Activated CD8-positive, alpha-beta memory T cell treated with anti-CD3 and anti-CD28 coated beads, Interleukin-2, amount 10 ng/mL, durations not matched to agents 7 days and 5 days (primary cell): ENCODE measurements at regions of chr9 and their contacts with region 1.

Region 1: GRCh38 chr9:126965541-126966428 is 51.2 kb downstream of the RALGPS1 start:
- DNase-seq: peak; percentile 60
- ATAC-seq: peak; percentile 75
- H3K4me3 Mint-ChIP-seq: no peak overlapping the region
- H3K27ac Mint-ChIP-seq: no peak overlapping the region
- H3K4me1 Mint-ChIP-seq: peaks cover 5% of the 10 kb centered on the region
- H3K27me3 Mint-ChIP-seq: peaks cover 7% of the 10 kb centered on the region

Region 2: DNA sequence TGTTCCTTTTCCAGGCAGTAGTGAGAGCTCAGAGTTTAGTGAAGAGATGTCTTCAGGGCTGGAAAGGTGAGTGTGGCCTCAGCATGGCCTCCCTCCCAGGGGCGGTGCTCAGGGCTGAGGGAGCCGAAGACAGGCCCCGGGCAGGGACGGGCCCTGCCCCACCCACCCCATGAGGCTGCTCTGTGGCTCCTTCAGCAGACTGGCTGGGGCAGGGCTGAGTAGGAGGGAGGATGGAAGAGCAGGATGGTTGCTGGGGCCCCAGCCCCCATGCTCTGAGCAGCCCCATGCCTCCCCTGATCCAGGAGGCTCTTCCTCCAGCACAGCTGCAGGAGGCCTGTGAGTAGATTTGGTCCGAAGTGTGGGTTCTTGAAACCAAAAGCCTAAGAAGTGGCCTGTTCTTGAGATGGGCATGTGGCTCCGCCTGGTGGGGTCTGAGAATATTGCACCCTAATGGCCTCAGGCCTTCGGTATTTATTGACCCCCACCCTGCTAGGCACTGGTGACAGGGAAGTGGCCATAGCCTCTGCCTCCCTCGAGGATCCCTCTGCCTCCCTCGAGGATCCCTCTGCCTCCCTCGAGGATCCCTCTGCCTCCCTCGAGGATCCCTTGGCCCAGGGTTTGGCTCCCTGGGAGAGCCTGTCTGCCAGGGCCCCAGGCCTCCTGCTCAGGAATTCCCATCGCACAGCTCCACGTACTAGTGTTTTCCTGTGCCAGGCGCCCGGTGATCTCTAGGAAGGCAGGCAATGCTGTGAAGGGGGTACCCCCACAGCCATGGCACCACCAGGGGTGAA is 233.4 kb after region 1 on chr9:
- CTCF ChIA-PET with region 1: interaction called, 20 read pairs
- DNase-seq: peak; percentile 85
- ATAC-seq: peak; percentile 79
- H3K4me3 Mint-ChIP-seq: no peak overlapping the region
- H3K27ac Mint-ChIP-seq: no peak overlapping the region
- H3K4me1 Mint-ChIP-seq: peaks cover 5% of the 10 kb centered on the region
- H3K27me3 Mint-ChIP-seq: no peaks in the 10 kb centered on the region